Activated CD4-positive, alpha-beta memory T cell treated with anti-CD3 and anti-CD28 coated beads for 36 hours (primary cell): ENCODE measurements at regions of chr1 and their contacts with region 1.

Region 1: GRCh38 chr1:171590022-171590421 is 32.0 kb upstream of the MYOCOS start:
- DNase-seq: no peak
- H3K4me3 Mint-ChIP-seq: no peak overlapping the region
- H3K27ac Mint-ChIP-seq: no peak overlapping the region
- H3K4me1 Mint-ChIP-seq: peaks cover 15% of the 10 kb centered on the region
- H3K27me3 Mint-ChIP-seq: no peaks in the 10 kb centered on the region

Region 2: DNA sequence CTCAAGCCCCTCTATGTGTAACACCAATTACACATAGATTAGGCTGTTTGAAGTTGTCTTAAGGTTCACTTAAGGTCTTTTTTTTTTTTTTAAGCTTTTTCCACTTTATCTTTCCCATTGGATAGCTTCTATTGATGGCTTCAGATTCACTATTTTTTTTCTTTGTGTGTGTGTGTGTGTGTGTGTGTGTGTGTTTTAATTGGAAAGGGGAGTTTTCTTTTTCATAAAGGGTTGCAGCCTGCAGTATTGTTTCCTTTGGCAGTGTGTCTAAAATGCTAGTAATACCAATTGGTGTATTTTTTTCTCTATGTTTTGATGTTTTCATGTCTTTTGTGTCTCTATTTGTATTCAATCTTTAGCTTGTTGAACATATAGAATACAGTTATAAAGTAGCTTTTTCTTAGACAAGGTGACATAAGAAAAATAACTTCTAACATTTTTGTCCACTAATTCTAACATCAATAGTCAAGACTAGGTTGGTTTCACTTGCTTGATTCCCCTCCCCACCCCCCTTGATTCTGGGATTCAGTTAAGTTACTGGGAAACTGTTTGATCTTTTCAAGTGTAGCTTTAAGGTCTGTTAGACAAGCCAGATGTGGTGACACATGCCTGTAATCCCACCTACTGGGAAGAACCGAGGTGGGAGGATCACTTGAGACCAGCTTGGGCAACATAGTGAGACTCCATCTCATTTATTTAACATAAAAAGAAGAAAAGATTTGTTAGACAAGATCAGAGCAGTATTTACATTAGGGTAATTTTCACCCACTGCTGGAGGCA is 83.3 kb before region 1 on chr1:
- CTCF ChIA-PET with region 1: no interaction called
- POLR2A ChIA-PET with region 1: no interaction called
- intact Hi-C with region 1: loop called (anchors 5 kb)
- DNase-seq: no peak
- H3K4me3 Mint-ChIP-seq: no peak overlapping the region
- H3K27ac Mint-ChIP-seq: peak overlapping the region; percentile 72
- H3K4me1 Mint-ChIP-seq: peaks cover 92% of the 10 kb centered on the region
- H3K27me3 Mint-ChIP-seq: no peaks in the 10 kb centered on the region

Region 3: DNA sequence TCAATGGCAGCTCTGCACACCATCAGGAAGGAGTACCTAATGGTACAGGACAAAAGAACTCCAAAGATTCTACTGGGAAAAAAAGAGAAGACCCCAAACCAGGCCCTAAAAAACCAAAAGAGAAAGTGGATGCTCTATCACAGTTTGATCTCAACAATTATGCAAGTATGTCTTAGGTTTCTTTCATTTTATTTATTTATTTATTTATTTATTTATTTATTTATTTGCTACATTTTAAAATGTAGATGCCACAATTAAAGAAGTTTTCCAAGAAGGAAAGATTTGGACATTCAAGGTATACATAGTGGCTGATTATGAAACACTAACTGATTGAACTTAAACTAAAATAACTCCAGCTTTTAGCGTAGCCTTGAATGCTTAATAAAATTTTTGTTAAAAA is 44.5 kb before region 1 on chr1:
- CTCF ChIA-PET with region 1: no interaction called
- POLR2A ChIA-PET with region 1: no interaction called
- intact Hi-C with region 1: loop called (anchors 5 kb)
- DNase-seq: no peak
- H3K4me3 Mint-ChIP-seq: no peak overlapping the region
- H3K27ac Mint-ChIP-seq: no peak overlapping the region
- H3K4me1 Mint-ChIP-seq: peaks cover 14% of the 10 kb centered on the region
- H3K27me3 Mint-ChIP-seq: no peaks in the 10 kb centered on the region